CD8-positive, alpha-beta memory T cell (primary cell): ENCODE measurements at regions of chr16 and their contacts with region 1.

Region 1: DNA sequence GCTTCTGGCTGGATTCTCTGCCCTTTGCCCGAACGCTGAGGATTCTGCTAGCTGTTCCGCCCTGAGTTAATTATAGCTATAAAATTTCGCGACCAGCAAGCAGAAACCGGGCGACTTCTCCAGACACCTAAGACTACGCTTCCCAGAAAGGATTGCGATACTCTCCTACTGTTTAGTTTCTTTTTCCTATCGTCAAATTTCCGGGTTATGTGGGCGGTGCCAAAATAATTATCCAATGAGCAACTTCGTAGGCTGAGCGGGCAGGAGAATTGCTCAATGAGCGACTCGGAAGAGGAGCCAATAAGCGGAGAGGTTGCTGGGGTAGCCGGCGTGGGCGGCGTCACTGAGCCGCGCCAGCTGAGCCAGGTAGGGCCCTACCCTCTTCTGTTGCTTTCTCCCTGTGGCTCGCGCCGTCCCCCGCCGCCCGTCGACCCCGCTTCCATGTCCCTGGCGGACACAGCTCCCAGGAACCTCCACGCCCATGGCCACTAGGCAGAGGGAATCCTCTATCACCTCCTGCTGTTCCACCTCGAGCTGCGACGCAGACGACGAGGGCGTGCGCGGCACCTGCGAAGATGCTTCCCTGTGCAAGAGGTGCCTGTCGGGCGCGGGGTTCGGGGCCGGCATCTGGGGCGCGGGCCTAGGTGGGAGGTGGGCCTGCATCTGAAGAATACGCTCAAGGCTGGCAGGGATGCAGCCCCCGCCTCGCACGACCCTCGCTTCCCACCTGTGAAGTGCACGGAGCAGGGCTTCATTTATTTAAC is at the start of gene LCMT1:
- DNase-seq: peak; percentile 82 to 94 (median 93)
- H3K4me3 ChIP-seq: peak within 1 kb of the TSS; percentile 92
- H3K4me3 Mint-ChIP-seq: peak within 1 kb of the TSS; percentile 89 to 97 (median 96)
- H3K27ac ChIP-seq: peak within 1 kb of the TSS; percentile 79
- H3K27ac Mint-ChIP-seq: peak within 1 kb of the TSS; percentile 48 to 98 (median 96)
- H3K4me1 ChIP-seq: peaks cover 36% of the 10 kb centered on the region
- H3K4me1 Mint-ChIP-seq: peaks cover 55 to 77% (median 77%) of the 10 kb centered on the region in 3 donors
- H3K27me3 ChIP-seq: no peaks in the 10 kb centered on the region
- H3K27me3 Mint-ChIP-seq: no peaks in the 10 kb centered on the region
- total RNA-seq, gene LCMT1: 43.6 to 43.8 TPM

Region 2: DNA sequence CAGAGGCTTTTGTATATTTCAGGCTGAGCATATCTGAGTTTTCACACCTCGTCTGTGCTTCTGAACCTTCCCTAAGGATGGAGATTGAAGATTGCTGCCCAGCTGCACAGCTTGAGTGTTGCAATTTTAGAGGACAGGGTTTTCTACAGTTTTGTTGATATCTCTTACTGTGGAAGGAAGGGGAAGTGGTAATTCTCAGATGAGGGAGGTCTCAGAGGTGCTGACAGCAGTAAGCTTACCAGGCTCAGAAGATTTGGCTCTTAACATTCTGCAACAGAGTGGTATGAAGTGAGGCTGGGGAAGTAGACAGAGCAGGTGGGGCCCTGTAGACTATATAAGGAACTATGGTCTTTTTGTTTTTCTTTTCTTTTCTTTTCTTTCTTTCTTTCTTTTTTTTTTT is 50.7 kb before region 1 on chr16:
- CTCF ChIA-PET with region 1: interaction called, 74 read pairs
- POLR2A ChIA-PET with region 1: interaction called, 11 read pairs
- DNase-seq: peak in 2 of 5 donors; percentile 46 to 75
- H3K4me3 ChIP-seq: no peak overlapping the region
- H3K4me3 Mint-ChIP-seq: peak overlapping the region; percentile 30 to 89 (median 76)
- H3K27ac ChIP-seq: no peak overlapping the region
- H3K27ac Mint-ChIP-seq: peak overlapping the region; percentile 73 to 98 (median 89)
- H3K4me1 ChIP-seq: peaks cover 47% of the 10 kb centered on the region
- H3K4me1 Mint-ChIP-seq: peaks cover 37 to 56% (median 43%) of the 10 kb centered on the region in 3 donors
- H3K27me3 ChIP-seq: no peaks in the 10 kb centered on the region
- H3K27me3 Mint-ChIP-seq: peaks cover 0 to 1% of the 10 kb centered on the region in 2 donors

Region 3: DNA sequence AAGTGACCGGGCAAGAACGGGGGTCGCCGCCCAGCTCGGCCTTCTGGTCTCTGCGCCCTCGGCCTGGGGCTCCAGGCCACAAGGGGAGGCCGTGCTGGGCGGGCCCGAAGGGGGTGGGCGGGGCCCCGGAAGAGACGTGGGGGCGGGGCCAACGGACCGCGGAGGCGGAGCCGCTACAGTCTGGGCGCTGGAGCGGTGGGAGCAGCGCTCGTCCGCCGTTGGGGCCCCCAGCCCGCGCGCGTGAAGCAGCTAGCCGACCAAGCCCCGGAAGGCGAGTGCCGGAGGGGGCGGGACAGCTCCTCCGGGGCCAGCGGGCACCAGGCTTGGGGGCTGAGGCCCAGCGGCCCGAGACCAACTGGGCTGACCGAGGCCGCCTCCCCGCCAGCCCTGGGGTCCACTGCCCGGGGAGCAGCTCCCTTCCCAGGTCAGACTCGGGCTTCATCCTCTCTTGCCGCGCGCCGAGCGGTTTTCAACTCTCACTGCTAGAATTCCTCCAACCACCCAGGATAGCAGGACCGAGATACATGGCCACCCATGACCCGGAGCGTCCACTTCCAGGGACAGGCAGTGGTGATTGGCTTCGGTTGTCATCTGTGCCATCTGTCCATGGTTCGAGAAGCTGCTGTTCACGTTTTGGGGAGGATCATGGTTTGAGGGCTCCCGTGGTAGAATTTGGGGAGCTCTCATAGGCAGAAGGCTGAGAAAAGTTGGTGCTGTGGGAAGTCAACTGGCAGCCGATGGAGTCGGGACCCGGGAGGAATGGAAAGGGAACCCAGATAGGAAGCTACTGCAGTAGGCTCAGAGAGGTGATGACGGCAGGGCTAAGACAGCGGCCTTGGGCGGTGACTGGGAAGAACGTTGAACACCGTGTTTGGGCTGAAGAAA is 44.6 kb before region 1 on chr16:
- CTCF ChIA-PET with region 1: interaction called, 74 read pairs
- POLR2A ChIA-PET with region 1: interaction called, 22 read pairs
- DNase-seq: peak; percentile 77 to 91 (median 82)
- H3K4me3 ChIP-seq: peak overlapping the region; percentile 93
- H3K4me3 Mint-ChIP-seq: peak overlapping the region; percentile 76 to 95 (median 87)
- H3K27ac ChIP-seq: peak overlapping the region; percentile 77
- H3K27ac Mint-ChIP-seq: peak overlapping the region; percentile 60 to 97 (median 90)
- H3K4me1 ChIP-seq: peaks cover 46% of the 10 kb centered on the region
- H3K4me1 Mint-ChIP-seq: peaks cover 32 to 47% (median 38%) of the 10 kb centered on the region in 3 donors
- H3K27me3 ChIP-seq: no peaks in the 10 kb centered on the region
- H3K27me3 Mint-ChIP-seq: no peaks in the 10 kb centered on the region